Activated T-helper 1 cell treated with anti-CD3 and anti-CD28 coated beads, Interleukin-12 subunit alpha, Interleukin-12 subunit beta, Interleukin-2, Interleukin-4 antibody, amounts not matched to agents 30 ng/mL and 10 ng/mL and 1 ng/mL, durations not matched to agents 14 hours and 24 hours and 36 hours (primary cell): ENCODE measurements at regions of chr20 and their contacts with region 1.

Region 1: GRCh38 chr20:63980806-63981728 is at the start of gene PRPF6:
- DNase-seq: peak; percentile 94
- H3K4me3 Mint-ChIP-seq: peak within 1 kb of the TSS; percentile 98
- H3K27ac Mint-ChIP-seq: peak within 1 kb of the TSS; percentile 99
- H3K4me1 Mint-ChIP-seq: peaks cover 64% of the 10 kb centered on the region
- H3K27me3 Mint-ChIP-seq: no peaks in the 10 kb centered on the region
- total RNA-seq, gene PRPF6: 82.3 and 83.6 TPM in 2 replicates

Region 2: GRCh38 chr20:63894358-63895201 is 86.5 kb before region 1 on chr20 and contains the start of gene DNAJC5:
- intact Hi-C with region 1: loop called (anchors 1 kb)
- DNase-seq: peak; percentile 98
- H3K4me3 Mint-ChIP-seq: peak within 1 kb of the TSS; percentile 89
- H3K27ac Mint-ChIP-seq: peak within 1 kb of the TSS; percentile 96
- H3K4me1 Mint-ChIP-seq: peaks cover 42% of the 10 kb centered on the region
- H3K27me3 Mint-ChIP-seq: no peaks in the 10 kb centered on the region
- total RNA-seq, gene DNAJC5: 47.5 and 48.2 TPM in 2 replicates

Region 3: GRCh38 chr20:64038565-64039292 is 57.7 kb after region 1 on chr20:
- intact Hi-C with region 1: loop called (anchors 1 kb)
- DNase-seq: peak; percentile 77
- H3K4me3 Mint-ChIP-seq: peak overlapping the region; percentile 73
- H3K27ac Mint-ChIP-seq: no peak overlapping the region
- H3K4me1 Mint-ChIP-seq: peaks cover 51% of the 10 kb centered on the region
- H3K27me3 Mint-ChIP-seq: peaks cover 3% of the 10 kb centered on the region

Region 4: GRCh38 chr20:64196847-64197306 is 215.8 kb after region 1 on chr20:
- intact Hi-C with region 1: no loop called
- DNase-seq: no peak
- H3K4me3 Mint-ChIP-seq: no peak overlapping the region
- H3K27ac Mint-ChIP-seq: no peak overlapping the region
- H3K4me1 Mint-ChIP-seq: no peaks in the 10 kb centered on the region
- H3K27me3 Mint-ChIP-seq: no peaks in the 10 kb centered on the region